ENCODE measurements at regions of chr9 and their contacts with region 1.

Region 1: DNA sequence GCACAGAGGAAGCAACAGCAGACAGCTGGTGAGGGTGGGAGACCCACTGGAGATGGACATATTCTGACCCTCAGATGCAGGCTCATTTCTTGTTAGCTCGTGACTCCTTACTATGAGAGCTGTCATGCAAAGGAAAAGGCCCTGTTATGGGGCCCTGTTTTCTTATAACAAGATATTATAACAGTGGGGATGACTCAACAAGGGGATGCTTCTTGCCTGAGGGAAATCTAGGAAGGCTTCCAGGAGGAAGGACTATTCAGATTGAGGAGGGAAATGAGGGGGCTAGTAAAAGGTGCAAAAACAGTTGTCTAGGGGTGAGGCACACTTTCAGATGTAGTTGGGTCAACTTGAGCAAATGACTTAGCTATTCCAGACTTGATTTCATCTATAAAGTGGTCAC is 83.0 kb downstream of the DAB2IP start:
- DNase-seq: no peak
- H3K4me3 ChIP-seq: no peak overlapping the region
- H3K27ac ChIP-seq: no peak overlapping the region
- H3K4me1 ChIP-seq: peaks cover 12% of the 10 kb centered on the region
- H3K27me3 ChIP-seq: no peaks in the 10 kb centered on the region
- CTCF ChIP-seq: no peak
- POLR2A ChIP-seq: no peak

Region 2: GRCh38 chr9:121708768-121709488 is 25.5 kb before region 1 on chr9:
- CTCF ChIA-PET with region 1: no interaction called
- POLR2A ChIA-PET with region 1: no interaction called
- dilution Hi-C with region 1: no loop called
- intact Hi-C with region 1: no loop called
- DNase-seq: no peak
- H3K4me3 ChIP-seq: no peak overlapping the region
- H3K27ac ChIP-seq: no peak overlapping the region
- H3K4me1 ChIP-seq: no peaks in the 10 kb centered on the region
- H3K27me3 ChIP-seq: no peaks in the 10 kb centered on the region
- CTCF ChIP-seq: no peak
- POLR2A ChIP-seq: no peak

Region 3: GRCh38 chr9:121765021-121765950 is 30.8 kb after region 1 on chr9:
- CTCF ChIA-PET with region 1: no interaction called
- POLR2A ChIA-PET with region 1: no interaction called
- dilution Hi-C with region 1: no loop called
- intact Hi-C with region 1: no loop called
- DNase-seq: peak; percentile 88
- H3K4me3 ChIP-seq: no peak overlapping the region
- H3K27ac ChIP-seq: peak overlapping the region; percentile 52
- H3K4me1 ChIP-seq: peaks cover 16% of the 10 kb centered on the region
- H3K27me3 ChIP-seq: no peaks in the 10 kb centered on the region
- CTCF ChIP-seq: no peak
- POLR2A ChIP-seq: no peak

Region 4: DNA sequence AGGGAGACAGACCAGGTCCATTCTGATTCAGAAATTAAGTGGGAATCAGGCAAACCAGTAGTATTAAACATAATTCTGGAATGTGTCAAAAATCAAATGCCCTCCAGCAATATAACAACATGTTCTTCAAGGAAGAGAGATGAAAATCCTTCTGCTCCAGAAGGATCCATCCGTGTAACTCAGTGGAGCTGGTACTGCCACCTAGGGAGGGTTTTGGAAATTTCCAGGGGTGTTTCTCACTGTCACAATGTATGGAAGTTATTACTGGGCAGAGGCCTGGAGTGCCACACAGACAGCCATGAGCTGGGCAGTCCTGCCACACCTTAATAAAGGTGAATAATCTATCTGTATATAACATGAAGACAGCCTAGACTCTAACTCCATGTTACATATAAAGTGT is 271.1 kb after region 1 on chr9:
- CTCF ChIA-PET with region 1: interaction called, 3 read pairs
- POLR2A ChIA-PET with region 1: interaction called, 12 read pairs
- dilution Hi-C with region 1: no loop called
- intact Hi-C with region 1: no loop called
- DNase-seq: peak; percentile 47
- H3K4me3 ChIP-seq: no peak overlapping the region
- H3K27ac ChIP-seq: no peak overlapping the region
- H3K4me1 ChIP-seq: no peaks in the 10 kb centered on the region
- H3K27me3 ChIP-seq: no peaks in the 10 kb centered on the region
- CTCF ChIP-seq: peak; percentile 36 to 48
- POLR2A ChIP-seq: no peak